Heart right ventricle (tissue), 16 donors: ENCODE measurements at regions of chr5 and their contacts with region 1.

Region 1: GRCh38 chr5:138418444-138418843 is 20.4 kb upstream of the REEP2 start:
- DNase-seq: no peak
- ATAC-seq: no peak
- H3K4me3 ChIP-seq: no peak overlapping the region
- H3K27ac ChIP-seq: no peak overlapping the region
- H3K4me1 ChIP-seq: no peaks in the 10 kb centered on the region
- H3K27me3 ChIP-seq: no peaks in the 10 kb centered on the region
- CTCF ChIP-seq: no peak

Region 2: DNA sequence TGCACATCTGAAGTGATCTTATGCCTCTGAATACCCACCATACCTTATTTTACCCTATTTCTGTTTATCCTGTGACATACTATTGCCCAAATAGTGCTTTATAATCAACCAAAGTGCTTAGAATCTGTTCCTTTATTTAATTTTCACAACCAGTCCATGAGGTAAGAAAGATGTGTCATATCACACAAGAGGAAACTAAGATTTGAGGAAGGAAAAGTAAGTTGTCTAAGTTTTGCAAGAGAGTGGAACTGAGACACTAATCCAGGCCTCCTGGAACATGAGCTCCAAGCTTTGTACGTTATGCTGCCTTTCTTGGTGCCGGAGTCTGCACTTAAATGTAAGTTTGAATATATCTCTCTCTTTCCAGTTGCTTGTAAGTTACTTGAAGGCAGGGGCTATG is 48.7 kb before region 1 on chr5:
- intact Hi-C with region 1: loop called in 2 of 10 experiments (anchors 10 kb)
- DNase-seq: no peak
- ATAC-seq: peak in 7 of 8 donors; percentile 15 to 63 (median 50)
- H3K4me3 ChIP-seq: peak overlapping the region in 1 of 10 donors; percentile 7
- H3K27ac ChIP-seq: peak overlapping the region in 4 of 10 donors; percentile 38 to 79 (median 58)
- H3K4me1 ChIP-seq: peaks cover 9 to 79% (median 63%) of the 10 kb centered on the region in 9 donors
- H3K27me3 ChIP-seq: no peaks in the 10 kb centered on the region
- CTCF ChIP-seq: no peak

Region 3: DNA sequence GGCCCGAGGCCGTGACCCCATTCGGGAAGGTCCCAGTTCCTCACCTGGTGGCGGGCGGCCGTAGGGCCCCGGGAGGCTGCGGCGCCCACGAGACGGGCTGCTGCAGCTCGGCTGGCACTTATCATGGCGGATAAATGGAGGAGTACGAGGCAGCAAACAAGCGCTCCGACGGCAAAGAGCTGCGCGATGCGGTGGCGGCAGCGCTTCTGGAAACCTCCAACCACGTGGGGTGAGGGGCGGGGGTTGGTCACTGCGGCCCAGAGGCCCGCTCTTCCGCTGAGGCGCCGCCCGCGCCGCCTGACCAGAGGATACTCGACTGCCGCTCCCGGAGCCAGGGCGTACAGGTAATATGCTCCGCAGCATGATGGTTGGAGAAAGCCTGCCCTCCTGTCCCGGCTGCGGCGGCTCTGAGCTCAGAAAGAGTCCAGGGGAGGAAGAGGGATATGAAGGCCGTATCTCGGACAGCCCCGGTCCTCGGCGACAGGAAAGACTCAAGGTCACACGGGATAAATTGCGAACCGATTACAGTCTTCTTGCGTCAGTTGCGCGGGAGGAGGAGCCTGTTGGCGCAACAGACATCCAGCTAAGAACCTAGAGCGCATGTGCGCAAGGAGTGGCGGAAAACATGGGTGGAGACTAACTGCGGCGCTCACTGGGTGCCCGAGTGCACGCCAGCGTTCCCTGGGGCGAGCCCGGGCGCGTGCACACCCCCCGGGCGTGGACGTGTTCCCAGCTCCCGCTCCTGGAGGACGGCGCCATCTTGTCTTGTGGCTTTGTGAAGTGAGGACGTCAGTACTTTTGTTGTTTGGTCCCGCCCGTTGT is 157.0 kb after region 1 on chr5 and contains the start of gene HSPA9:
- intact Hi-C with region 1: no loop called
- DNase-seq: peak; percentile 96 to 99
- ATAC-seq: peak; percentile 96 to 98 (median 97)
- H3K4me3 ChIP-seq: peak within 1 kb of the TSS; percentile 69 to 98 (median 86)
- H3K27ac ChIP-seq: peak within 1 kb of the TSS; percentile 93 to 99 (median 98)
- H3K4me1 ChIP-seq: peaks cover 0 to 38% (median 20%) of the 10 kb centered on the region in 9 donors
- H3K27me3 ChIP-seq: no peaks in the 10 kb centered on the region
- CTCF ChIP-seq: peak in 2 of 9 donors; percentile 9 to 17
- total RNA-seq, gene HSPA9: 246 to 415 (median 324) TPM